MCF 10A (cell line): ENCODE measurements at regions of chr1 and their contacts with region 1.

Region 1: GRCh38 chr1:44213222-44214112 is at the start of gene DMAP1:
- DNase-seq: peak; percentile 80
- H3K4me3 Mint-ChIP-seq: peak within 1 kb of the TSS; percentile 82
- H3K27ac Mint-ChIP-seq: peak within 1 kb of the TSS; percentile 80
- H3K4me1 Mint-ChIP-seq: peaks cover 25% of the 10 kb centered on the region
- H3K27me3 Mint-ChIP-seq: no peaks in the 10 kb centered on the region
- CTCF ChIP-seq: no peak
- total RNA-seq, gene DMAP1: 36.6 and 38.5 TPM in 2 replicates

Region 2: DNA sequence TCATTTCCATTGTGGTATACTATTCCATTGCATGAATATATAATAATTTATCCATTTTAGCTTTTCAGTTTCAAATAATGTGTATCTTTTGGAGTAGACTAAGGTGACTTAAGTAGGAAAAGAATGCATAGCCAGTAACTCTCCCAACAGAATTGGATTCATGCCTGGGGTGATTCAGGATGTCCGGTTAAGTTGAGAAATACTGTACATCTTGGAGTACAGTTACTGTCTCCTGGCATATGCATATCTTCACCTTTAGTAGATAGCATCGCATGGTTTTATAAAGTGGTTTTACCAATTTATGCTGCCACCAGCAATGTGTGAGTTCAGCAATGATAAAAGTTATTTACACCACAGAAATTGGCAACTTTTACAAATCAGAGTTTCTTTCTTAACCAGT is 163.6 kb before region 1 on chr1:
- CTCF ChIA-PET with region 1: interaction called, 5 read pairs
- POLR2A ChIA-PET with region 1: interaction called, 3 read pairs
- intact Hi-C with region 1: loop called (anchors 5 kb)
- DNase-seq: peak; percentile 92
- H3K4me3 Mint-ChIP-seq: no peak overlapping the region
- H3K27ac Mint-ChIP-seq: no peak overlapping the region
- H3K4me1 Mint-ChIP-seq: peaks cover 33% of the 10 kb centered on the region
- H3K27me3 Mint-ChIP-seq: no peaks in the 10 kb centered on the region
- CTCF ChIP-seq: no peak

Region 3: GRCh38 chr1:44089371-44090049 is 124.0 kb before region 1 on chr1:
- CTCF ChIA-PET with region 1: interaction called, 3 read pairs
- POLR2A ChIA-PET with region 1: no interaction called
- intact Hi-C with region 1: loop called (anchors 2 kb)
- DNase-seq: peak; percentile 54
- H3K4me3 Mint-ChIP-seq: no peak overlapping the region
- H3K27ac Mint-ChIP-seq: no peak overlapping the region
- H3K4me1 Mint-ChIP-seq: peaks cover 12% of the 10 kb centered on the region
- H3K27me3 Mint-ChIP-seq: no peaks in the 10 kb centered on the region
- CTCF ChIP-seq: no peak

Region 4: DNA sequence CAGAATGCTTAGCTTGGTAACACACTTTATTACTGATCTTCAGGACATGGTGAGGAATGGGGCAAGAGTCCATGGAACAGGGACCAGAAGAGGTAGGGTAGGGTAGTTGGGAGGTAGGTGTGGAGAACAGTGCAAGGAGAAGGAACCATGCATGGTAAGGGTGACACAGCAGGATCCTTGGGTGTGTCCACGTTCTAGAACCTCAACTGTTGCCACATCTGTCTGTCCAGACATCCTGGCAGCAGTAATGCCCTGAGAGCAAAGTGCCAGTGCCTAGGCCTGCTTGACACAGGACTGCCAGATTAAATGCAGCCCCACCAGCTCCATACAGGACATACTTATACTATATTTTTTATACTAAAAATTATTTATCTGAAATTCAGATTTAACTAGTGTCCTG is 13.7 kb after region 1 on chr1:
- CTCF ChIA-PET with region 1: interaction called, 15 read pairs
- POLR2A ChIA-PET with region 1: interaction called, 4 read pairs
- intact Hi-C with region 1: no loop called
- DNase-seq: peak; percentile 10
- H3K4me3 Mint-ChIP-seq: no peak overlapping the region
- H3K27ac Mint-ChIP-seq: peak overlapping the region; percentile 36
- H3K4me1 Mint-ChIP-seq: peaks cover 6% of the 10 kb centered on the region
- H3K27me3 Mint-ChIP-seq: no peaks in the 10 kb centered on the region
- CTCF ChIP-seq: no peak

Region 5: DNA sequence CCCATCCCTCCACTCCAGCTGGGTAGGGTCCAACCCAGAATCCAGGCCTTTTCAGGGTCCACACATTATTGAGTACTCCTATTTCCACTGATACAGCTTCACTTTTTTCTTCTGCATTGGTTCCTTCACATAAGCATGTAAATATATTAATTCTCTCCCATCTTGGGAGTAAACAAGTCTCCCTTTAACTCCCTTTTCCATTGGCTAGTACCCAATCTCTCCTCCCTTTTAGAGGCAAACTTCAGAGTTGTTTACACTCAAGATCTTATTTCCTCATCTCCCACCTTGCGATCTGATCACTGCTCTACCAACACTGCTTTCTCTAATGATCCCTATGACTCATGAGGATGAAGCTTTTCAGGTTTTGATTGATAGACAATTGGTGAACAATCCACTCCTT is 20.1 kb after region 1 on chr1:
- CTCF ChIA-PET with region 1: interaction called, 14 read pairs
- POLR2A ChIA-PET with region 1: no interaction called
- intact Hi-C with region 1: no loop called
- DNase-seq: no peak
- H3K4me3 Mint-ChIP-seq: no peak overlapping the region
- H3K27ac Mint-ChIP-seq: no peak overlapping the region
- H3K4me1 Mint-ChIP-seq: no peaks in the 10 kb centered on the region
- H3K27me3 Mint-ChIP-seq: no peaks in the 10 kb centered on the region
- CTCF ChIP-seq: no peak